ENCODE measurements at regions of chr13 and their contacts with region 1.

Region 1: GRCh38 chr13:49606747-49607648 is 21.3 kb upstream of the ARL11 start:
- DNase-seq: peak; percentile 83 to 84
- H3K4me3 ChIP-seq: no peak overlapping the region
- H3K4me3 Mint-ChIP-seq: peak overlapping the region; percentile 60
- H3K27ac Mint-ChIP-seq: no peak overlapping the region
- H3K4me1 ChIP-seq: no peaks in the 10 kb centered on the region
- H3K4me1 Mint-ChIP-seq: peaks cover 7% of the 10 kb centered on the region
- H3K27me3 ChIP-seq: no peaks in the 10 kb centered on the region
- H3K27me3 Mint-ChIP-seq: no peaks in the 10 kb centered on the region
- CTCF ChIP-seq: peak; percentile 83 to 88

Region 2: GRCh38 chr13:49110122-49110912 is 496.7 kb before region 1 on chr13:
- CTCF ChIA-PET with region 1: no interaction called
- POLR2A ChIA-PET with region 1: no interaction called
- intact Hi-C with region 1: loop called (anchors 10 kb)
- DNase-seq: peak; percentile 81 to 88
- H3K4me3 ChIP-seq: peak overlapping the region; percentile 52
- H3K4me3 Mint-ChIP-seq: peak overlapping the region; percentile 74
- H3K27ac Mint-ChIP-seq: peak overlapping the region; percentile 43
- H3K4me1 ChIP-seq: peaks cover 13% of the 10 kb centered on the region; the same call in 1 of the 2 replicates
- H3K4me1 Mint-ChIP-seq: peaks cover 17% of the 10 kb centered on the region
- H3K27me3 ChIP-seq: no peaks in the 10 kb centered on the region
- H3K27me3 Mint-ChIP-seq: no peaks in the 10 kb centered on the region
- CTCF ChIP-seq: no peak

Region 3: GRCh38 chr13:49247643-49248621 is 359.1 kb before region 1 on chr13 and contains the start of gene CDADC1:
- CTCF ChIA-PET with region 1: interaction called, 4 read pairs
- POLR2A ChIA-PET with region 1: no interaction called
- intact Hi-C with region 1: loop called (anchors 1 kb)
- DNase-seq: peak; percentile 98
- H3K4me3 ChIP-seq: peak within 1 kb of the TSS; percentile 97
- H3K4me3 Mint-ChIP-seq: peak within 1 kb of the TSS; percentile 89
- H3K27ac Mint-ChIP-seq: peak within 1 kb of the TSS; percentile 88
- H3K4me1 ChIP-seq: peaks cover 4% of the 10 kb centered on the region; the same call in 1 of the 2 replicates
- H3K4me1 Mint-ChIP-seq: no peaks in the 10 kb centered on the region
- H3K27me3 ChIP-seq: no peaks in the 10 kb centered on the region
- H3K27me3 Mint-ChIP-seq: peaks cover 2% of the 10 kb centered on the region
- CTCF ChIP-seq: no peak
- total RNA-seq, gene CDADC1: 14.4 and 15.9 TPM in 2 replicates

Region 4: GRCh38 chr13:49300739-49301589 is 306.0 kb before region 1 on chr13:
- CTCF ChIA-PET with region 1: interaction called, 6 read pairs
- POLR2A ChIA-PET with region 1: no interaction called
- intact Hi-C with region 1: loop called (anchors 1 kb)
- DNase-seq: peak; percentile 75
- H3K4me3 ChIP-seq: no peak overlapping the region
- H3K4me3 Mint-ChIP-seq: peak overlapping the region; percentile 57
- H3K27ac Mint-ChIP-seq: peak overlapping the region; percentile 69
- H3K4me1 ChIP-seq: peaks cover 28% of the 10 kb centered on the region
- H3K4me1 Mint-ChIP-seq: peaks cover 33% of the 10 kb centered on the region
- H3K27me3 ChIP-seq: no peaks in the 10 kb centered on the region
- H3K27me3 Mint-ChIP-seq: no peaks in the 10 kb centered on the region
- CTCF ChIP-seq: peak; percentile 86 to 91

Region 5: DNA sequence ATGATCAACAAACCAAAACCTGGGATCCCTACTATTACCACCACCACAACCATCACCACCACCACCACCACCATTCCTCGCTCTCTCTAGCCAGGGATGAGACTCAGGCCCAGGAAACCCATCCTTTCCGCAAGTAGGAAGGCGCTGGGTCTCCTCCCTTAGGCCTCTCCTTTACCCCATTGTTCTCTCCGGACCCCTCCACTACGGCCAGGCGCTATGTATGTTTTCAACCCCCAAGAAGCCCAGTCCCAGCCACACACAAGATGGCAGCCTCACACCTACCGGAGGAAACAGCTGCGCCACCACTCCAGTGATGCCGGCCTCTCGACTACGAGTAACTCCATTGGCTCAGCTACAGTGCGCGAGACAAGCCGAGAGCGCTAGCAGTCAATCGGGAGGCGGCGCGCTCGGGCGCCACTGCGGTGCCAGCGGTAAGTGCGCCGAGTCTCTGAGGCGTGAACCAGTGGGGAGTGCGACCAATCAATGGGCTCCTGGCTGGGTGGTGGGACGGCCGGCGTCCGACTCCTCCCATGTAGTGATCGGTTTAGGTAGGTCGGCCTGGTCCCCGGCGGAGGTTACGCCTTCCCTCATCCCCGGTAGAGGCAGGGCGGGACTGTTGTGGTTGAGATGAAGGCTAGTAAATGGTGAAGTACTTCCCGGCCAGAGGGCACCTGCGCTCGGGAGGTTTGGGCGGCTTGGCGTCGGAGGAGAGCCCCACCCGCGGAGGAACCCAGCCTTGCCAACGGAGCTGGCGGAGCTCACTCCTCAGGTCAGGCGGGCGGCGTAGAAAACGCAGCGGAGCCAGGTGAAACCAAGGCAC is 163.1 kb before region 1 on chr13 and contains the starts of genes CAB39L and SETDB2:
- CTCF ChIA-PET with region 1: interaction called, 7 read pairs
- POLR2A ChIA-PET with region 1: no interaction called
- intact Hi-C with region 1: loop called (anchors 1 kb)
- DNase-seq: peak; percentile 99 to 100
- H3K4me3 ChIP-seq: peak within 1 kb of the TSS; percentile 60
- H3K4me3 Mint-ChIP-seq: peak within 1 kb of the TSS; percentile 87
- H3K27ac Mint-ChIP-seq: peak within 1 kb of the TSS; percentile 90
- H3K4me1 ChIP-seq: no peaks in the 10 kb centered on the region; the same call in 1 of the 2 replicates
- H3K4me1 Mint-ChIP-seq: peaks cover 6% of the 10 kb centered on the region
- H3K27me3 ChIP-seq: no peaks in the 10 kb centered on the region
- H3K27me3 Mint-ChIP-seq: no peaks in the 10 kb centered on the region
- CTCF ChIP-seq: peak; percentile 22 to 39
- total RNA-seq, gene CAB39L: 40.6 and 48.6 TPM in 2 replicates
- total RNA-seq, gene SETDB2: 14.7 and 15.5 TPM in 2 replicates

Region 6: DNA sequence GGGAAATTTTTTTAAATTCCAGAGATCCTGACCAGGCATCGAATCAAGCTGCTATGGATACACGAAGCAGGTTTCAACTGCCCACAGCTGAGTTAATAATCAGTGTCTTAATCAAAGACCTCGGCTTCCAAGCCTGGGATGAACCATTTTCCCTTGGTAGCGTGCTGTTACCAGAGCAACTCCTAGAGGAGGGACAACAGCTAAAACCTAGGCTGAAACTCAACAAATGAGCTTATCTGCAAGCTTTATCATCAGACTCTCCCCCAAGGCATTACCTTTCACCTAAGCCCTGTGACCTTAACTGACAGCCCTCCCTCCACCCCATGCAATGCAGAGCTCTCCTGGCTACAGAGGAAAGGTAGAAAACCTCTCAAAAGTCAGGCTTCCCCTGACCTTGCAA is 61.3 kb before region 1 on chr13:
- CTCF ChIA-PET with region 1: no interaction called
- POLR2A ChIA-PET with region 1: no interaction called
- intact Hi-C with region 1: loop called (anchors 2 kb)
- DNase-seq: peak in 1 of 2 experiments; percentile 50
- H3K4me3 ChIP-seq: no peak overlapping the region
- H3K4me3 Mint-ChIP-seq: no peak overlapping the region
- H3K27ac Mint-ChIP-seq: peak overlapping the region; percentile 39
- H3K4me1 ChIP-seq: peaks cover 11% of the 10 kb centered on the region
- H3K4me1 Mint-ChIP-seq: no peaks in the 10 kb centered on the region
- H3K27me3 ChIP-seq: no peaks in the 10 kb centered on the region
- H3K27me3 Mint-ChIP-seq: no peaks in the 10 kb centered on the region
- CTCF ChIP-seq: no peak

Region 7: DNA sequence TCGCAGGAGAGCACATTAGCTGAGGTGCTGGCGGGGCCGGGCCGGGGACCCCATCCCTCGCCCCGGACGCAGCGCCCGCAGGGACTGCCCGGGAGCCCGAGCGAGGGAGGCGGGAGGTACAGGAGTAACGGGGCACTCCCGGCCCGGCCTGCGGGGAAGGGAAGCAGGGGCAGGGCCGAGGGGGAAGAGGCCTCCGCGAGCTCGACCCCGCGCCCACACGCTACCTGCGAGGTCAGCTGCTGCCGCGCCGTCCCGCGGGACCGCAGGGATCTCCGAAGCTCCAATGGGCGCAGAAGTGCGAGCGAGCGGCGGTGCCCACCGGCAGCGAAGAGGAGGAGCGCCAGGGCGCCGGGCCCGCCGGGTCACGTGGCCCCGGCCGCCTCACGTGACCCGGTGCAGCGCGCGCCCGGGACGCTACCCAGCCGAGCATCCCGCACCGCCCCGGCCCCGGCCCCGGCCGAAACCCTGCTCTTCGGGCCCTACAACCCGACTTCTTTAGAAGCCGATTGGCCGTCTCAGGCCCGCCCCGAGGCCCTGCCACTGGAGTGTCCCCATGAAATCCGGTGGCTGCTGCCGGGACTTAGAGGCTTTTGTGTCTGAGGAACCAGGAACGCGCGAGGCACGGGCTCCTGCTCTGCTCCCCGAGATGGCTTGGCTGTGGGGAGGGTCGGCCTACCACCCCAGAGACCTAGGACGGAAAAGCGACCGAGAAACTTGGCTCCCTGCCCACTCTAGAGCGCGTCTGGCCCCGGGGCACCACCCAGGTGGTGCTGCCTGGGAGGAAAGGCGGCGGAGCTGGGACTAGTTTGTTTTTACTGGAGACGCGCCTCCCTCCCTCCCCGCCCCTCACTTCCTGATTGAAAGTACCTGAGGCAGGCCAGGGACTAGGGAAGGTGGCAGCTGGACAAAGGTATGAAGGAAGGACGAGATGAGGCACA is 21.5 kb before region 1 on chr13 and contains the start of gene RCBTB1:
- CTCF ChIA-PET with region 1: interaction called, 4 read pairs
- POLR2A ChIA-PET with region 1: no interaction called
- intact Hi-C with region 1: loop called (anchors 1 kb)
- DNase-seq: peak; percentile 73 to 76
- H3K4me3 ChIP-seq: peak within 1 kb of the TSS; percentile 97
- H3K4me3 Mint-ChIP-seq: peak within 1 kb of the TSS; percentile 84
- H3K27ac Mint-ChIP-seq: peak within 1 kb of the TSS; percentile 84
- H3K4me1 ChIP-seq: peaks cover 19% of the 10 kb centered on the region
- H3K4me1 Mint-ChIP-seq: peaks cover 16% of the 10 kb centered on the region
- H3K27me3 ChIP-seq: no peaks in the 10 kb centered on the region
- H3K27me3 Mint-ChIP-seq: no peaks in the 10 kb centered on the region
- CTCF ChIP-seq: no peak
- total RNA-seq, gene RCBTB1: 23.0 and 25.7 TPM in 2 replicates

Region 8: GRCh38 chr13:49679246-49679645 is 72.2 kb after region 1 on chr13:
- CTCF ChIA-PET with region 1: no interaction called
- POLR2A ChIA-PET with region 1: no interaction called
- intact Hi-C with region 1: no loop called
- DNase-seq: peak in 1 of 2 experiments; percentile 24
- H3K4me3 ChIP-seq: no peak overlapping the region
- H3K4me3 Mint-ChIP-seq: no peak overlapping the region
- H3K27ac Mint-ChIP-seq: no peak overlapping the region
- H3K4me1 ChIP-seq: no peaks in the 10 kb centered on the region
- H3K4me1 Mint-ChIP-seq: no peaks in the 10 kb centered on the region
- H3K27me3 ChIP-seq: no peaks in the 10 kb centered on the region
- H3K27me3 Mint-ChIP-seq: no peaks in the 10 kb centered on the region
- CTCF ChIP-seq: peak in 1 of 2 experiments; percentile 34

Measured in Caco-2 (cell line).